Activated naive CD4-positive, alpha-beta T cell treated with anti-CD3 and anti-CD28 coated beads, Interleukin-2, amount 10 ng/mL, durations not matched to agents 7 days and 5 days (primary cell): ENCODE measurements at regions of chr4 and their contacts with region 1.

Region 1: GRCh38 chr4:121307445-121308327 is 73.1 kb downstream of the QRFPR start:
- DNase-seq: peak; percentile 56
- H3K4me3 Mint-ChIP-seq: no peak overlapping the region
- H3K27ac Mint-ChIP-seq: no peak overlapping the region
- H3K4me1 Mint-ChIP-seq: peaks cover 12% of the 10 kb centered on the region
- H3K27me3 Mint-ChIP-seq: no peaks in the 10 kb centered on the region

Region 2: DNA sequence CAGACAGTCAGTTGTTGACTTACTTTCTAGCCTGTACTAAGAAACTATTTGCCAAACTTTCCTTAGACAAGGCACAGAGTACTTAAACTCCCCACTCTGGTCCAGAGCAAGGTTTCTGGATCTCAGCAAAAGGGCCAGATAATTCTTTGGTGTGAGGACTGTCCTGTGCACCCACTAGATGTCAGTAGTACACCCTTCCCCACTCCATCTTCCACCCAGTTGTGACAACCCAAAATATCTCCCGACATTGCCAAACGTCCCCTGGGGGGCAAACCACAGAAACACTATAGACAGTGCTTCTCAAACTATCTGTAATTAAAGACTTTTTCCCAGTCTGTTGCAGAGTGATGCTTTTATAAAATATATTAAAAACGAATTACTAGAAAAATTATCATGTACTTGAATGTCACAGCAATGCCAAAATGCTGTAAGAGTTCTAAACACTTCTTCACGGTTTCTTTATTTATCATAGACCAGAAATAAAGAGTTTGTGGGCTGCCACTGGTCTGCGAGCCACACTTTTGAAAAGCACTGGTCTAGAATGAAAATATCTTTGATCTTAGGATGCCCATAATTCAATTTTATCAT is 588.6 kb before region 1 on chr4:
- CTCF ChIA-PET with region 1: interaction called, 11 read pairs
- DNase-seq: peak; percentile 26
- H3K4me3 Mint-ChIP-seq: no peak overlapping the region
- H3K27ac Mint-ChIP-seq: no peak overlapping the region
- H3K4me1 Mint-ChIP-seq: no peaks in the 10 kb centered on the region
- H3K27me3 Mint-ChIP-seq: peaks cover 8% of the 10 kb centered on the region

Region 3: DNA sequence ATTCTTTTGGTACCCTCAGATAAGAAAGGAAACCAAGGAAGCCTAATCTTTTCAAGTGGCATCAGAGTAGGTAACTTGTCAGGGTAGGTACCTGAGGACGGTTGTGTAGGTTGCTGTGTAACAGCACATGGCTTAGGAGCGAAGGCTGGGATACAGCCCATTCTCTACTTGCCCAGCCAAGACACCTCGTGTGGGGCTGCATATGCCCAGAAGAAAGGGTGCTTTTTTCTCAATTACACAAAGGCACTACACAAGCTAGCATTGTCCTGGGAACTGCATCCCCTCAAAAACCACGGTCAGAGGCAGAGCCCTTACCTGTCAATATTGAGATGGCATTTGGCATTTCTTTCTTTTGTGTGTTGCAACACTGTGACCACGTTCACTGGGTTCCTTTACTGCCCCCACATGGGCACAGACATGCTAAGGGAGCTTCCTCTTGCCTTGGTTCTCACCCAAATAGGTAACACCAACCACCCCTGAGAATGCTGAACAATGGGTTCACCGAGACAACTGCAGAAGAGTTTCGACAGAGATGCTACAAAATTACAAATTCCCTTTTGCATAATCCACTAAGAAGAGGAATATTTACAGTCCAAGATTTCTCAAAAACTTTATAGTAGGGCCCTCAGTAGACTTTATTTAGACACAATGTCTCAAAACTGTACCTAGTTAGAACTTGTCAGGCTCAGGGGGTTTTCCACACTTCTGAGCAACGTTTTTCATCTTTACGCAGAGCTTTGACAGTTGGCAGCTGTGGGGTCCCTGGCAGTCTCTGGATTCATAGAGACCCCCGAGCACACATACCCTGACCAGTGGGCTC is 107.7 kb before region 1 on chr4:
- CTCF ChIA-PET with region 1: interaction called, 20 read pairs
- DNase-seq: peak; percentile 38
- H3K4me3 Mint-ChIP-seq: no peak overlapping the region
- H3K27ac Mint-ChIP-seq: no peak overlapping the region
- H3K4me1 Mint-ChIP-seq: peaks cover 24% of the 10 kb centered on the region
- H3K27me3 Mint-ChIP-seq: no peaks in the 10 kb centered on the region